ENCODE measurements at regions of chr1 and their contacts with region 1.

Region 1: DNA sequence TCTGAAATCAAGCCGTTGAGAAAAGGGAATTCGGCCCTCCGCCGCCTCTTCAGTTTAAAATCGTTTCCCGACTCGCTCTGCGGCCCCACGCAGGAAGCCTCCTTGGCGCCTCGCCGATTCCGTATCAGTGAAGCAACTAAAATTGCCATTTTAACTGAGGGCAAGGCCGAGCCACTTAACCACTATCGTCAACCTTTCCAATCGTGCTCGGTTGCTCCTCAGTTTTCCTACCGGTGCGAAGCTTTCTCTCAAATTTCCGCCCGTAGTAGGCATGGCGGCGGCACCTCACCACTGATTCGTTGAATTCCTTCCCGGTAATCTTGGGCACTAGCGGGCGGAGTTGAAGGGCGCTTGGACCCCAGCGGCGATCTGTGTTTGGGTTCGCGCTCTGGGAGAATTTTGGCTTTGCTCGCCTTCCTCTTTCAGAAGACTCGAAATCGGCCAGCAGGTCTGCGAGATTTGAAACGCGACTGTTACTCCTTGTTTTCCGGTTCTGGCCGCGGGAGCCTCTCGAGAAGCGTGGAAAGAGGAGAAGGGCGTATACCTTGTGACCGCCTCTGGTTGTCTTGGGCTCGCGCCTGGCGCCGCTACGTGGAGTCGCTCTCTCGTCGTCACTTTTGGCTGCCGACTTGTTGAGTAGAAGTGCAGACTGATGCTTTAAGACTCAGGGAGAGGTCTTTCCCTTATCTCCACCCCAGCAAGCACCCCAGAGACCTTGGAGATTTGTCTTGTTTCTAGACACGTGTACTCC is at the starts of genes CENPL and DARS2:
- DNase-seq: peak; percentile 93 to 97 (median 94)
- H3K4me3 ChIP-seq: peak within 1 kb of the TSS; percentile 70 to 99 (median 92)
- H3K4me3 Mint-ChIP-seq: peak within 1 kb of the TSS; percentile 99
- H3K27ac ChIP-seq: peak within 1 kb of the TSS; percentile 91 to 93
- H3K27ac Mint-ChIP-seq: peak within 1 kb of the TSS; percentile 97 to 100 (median 99)
- H3K4me1 ChIP-seq: peaks cover 15 to 26% of the 10 kb centered on the region in 2 donors
- H3K4me1 Mint-ChIP-seq: peaks cover 39% of the 10 kb centered on the region
- H3K27me3 ChIP-seq: no peaks in the 10 kb centered on the region
- H3K27me3 Mint-ChIP-seq: no peaks in the 10 kb centered on the region
- CTCF ChIP-seq: no peak
- polyA plus RNA-seq, gene CENPL: 0.49 to 2.6 (median 0.81) TPM
- polyA plus RNA-seq, gene DARS2: 3.2 to 8.2 (median 6.2) TPM

Region 2: DNA sequence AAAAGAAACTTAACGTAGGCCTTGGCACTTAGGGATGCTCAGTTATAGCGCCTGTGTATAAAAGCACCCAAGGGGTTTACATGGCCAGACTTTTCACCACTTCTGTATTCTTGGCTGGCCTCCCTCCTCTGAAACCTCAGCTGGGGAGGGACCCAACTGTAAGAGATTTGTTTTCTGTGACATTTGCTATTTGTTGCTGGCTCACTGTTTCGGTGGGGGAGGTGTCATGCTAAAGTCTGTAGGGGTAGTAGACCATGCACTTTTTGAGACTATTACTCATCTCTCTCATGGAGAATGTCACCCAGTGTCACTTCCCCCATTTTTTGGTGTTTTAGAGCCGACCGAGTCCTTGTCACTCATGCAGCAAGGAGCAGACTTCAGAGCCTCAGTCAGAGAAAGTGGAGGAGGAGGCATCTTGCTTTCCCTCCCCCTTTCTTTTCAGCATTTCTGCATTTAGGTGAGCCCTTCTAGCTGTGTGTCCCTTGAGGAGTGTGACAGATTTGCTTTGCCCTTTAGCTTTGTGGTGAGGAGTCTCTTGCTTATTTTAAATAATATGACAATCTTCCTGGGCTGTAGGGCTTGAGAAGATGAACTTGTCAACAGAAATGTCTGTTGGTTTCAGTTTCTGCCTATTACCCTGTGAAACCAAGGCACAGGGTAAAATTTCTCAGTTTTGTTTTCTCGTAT is 1005.5 kb before region 1 on chr1:
- intact Hi-C with region 1: loop called in 1 of 2 experiments (anchors 5 kb)
- DNase-seq: peak; percentile 77 to 82 (median 82)
- H3K4me3 ChIP-seq: no peak overlapping the region
- H3K4me3 Mint-ChIP-seq: no peak overlapping the region
- H3K27ac ChIP-seq: peak overlapping the region in 1 of 2 donors; percentile 73
- H3K27ac Mint-ChIP-seq: peak overlapping the region; percentile 43 to 91 (median 86)
- H3K4me1 ChIP-seq: peaks cover 15 to 23% of the 10 kb centered on the region in 2 donors
- H3K4me1 Mint-ChIP-seq: peaks cover 32% of the 10 kb centered on the region
- H3K27me3 ChIP-seq: no peaks in the 10 kb centered on the region
- H3K27me3 Mint-ChIP-seq: peaks cover 0 to 2% (median 2%) of the 10 kb centered on the region in 3 donors
- CTCF ChIP-seq: no peak

Region 3: GRCh38 chr1:173420330-173420806 is 404.1 kb before region 1 on chr1:
- intact Hi-C with region 1: loop called in 1 of 2 experiments (anchors 5 kb)
- DNase-seq: peak; percentile 72 to 83 (median 73)
- H3K4me3 ChIP-seq: no peak overlapping the region
- H3K4me3 Mint-ChIP-seq: peak overlapping the region in 1 of 2 donors; percentile 58
- H3K27ac ChIP-seq: no peak overlapping the region
- H3K27ac Mint-ChIP-seq: peak overlapping the region in 3 of 7 donors; percentile 51 to 79 (median 62)
- H3K4me1 ChIP-seq: peaks cover 38 to 47% of the 10 kb centered on the region in 2 donors
- H3K4me1 Mint-ChIP-seq: peaks cover 58% of the 10 kb centered on the region
- H3K27me3 ChIP-seq: no peaks in the 10 kb centered on the region
- H3K27me3 Mint-ChIP-seq: peaks cover 0 to 3% (median 0%) of the 10 kb centered on the region in 3 donors
- CTCF ChIP-seq: peak; percentile 91

Region 4: GRCh38 chr1:173429471-173430402 is 394.8 kb before region 1 on chr1:
- intact Hi-C with region 1: loop called (anchors 5 kb)
- DNase-seq: peak; percentile 55 to 64 (median 56)
- H3K4me3 ChIP-seq: peak overlapping the region; percentile 23 to 73 (median 52)
- H3K4me3 Mint-ChIP-seq: peak overlapping the region; percentile 62 to 89
- H3K27ac ChIP-seq: peak overlapping the region; percentile 64 to 82
- H3K27ac Mint-ChIP-seq: peak overlapping the region; percentile 79 to 94 (median 88)
- H3K4me1 ChIP-seq: peaks cover 32 to 35% of the 10 kb centered on the region in 2 donors
- H3K4me1 Mint-ChIP-seq: peaks cover 38% of the 10 kb centered on the region
- H3K27me3 ChIP-seq: no peaks in the 10 kb centered on the region
- H3K27me3 Mint-ChIP-seq: peaks cover 0 to 2% (median 0%) of the 10 kb centered on the region in 3 donors
- CTCF ChIP-seq: peak; percentile 68

Region 5: DNA sequence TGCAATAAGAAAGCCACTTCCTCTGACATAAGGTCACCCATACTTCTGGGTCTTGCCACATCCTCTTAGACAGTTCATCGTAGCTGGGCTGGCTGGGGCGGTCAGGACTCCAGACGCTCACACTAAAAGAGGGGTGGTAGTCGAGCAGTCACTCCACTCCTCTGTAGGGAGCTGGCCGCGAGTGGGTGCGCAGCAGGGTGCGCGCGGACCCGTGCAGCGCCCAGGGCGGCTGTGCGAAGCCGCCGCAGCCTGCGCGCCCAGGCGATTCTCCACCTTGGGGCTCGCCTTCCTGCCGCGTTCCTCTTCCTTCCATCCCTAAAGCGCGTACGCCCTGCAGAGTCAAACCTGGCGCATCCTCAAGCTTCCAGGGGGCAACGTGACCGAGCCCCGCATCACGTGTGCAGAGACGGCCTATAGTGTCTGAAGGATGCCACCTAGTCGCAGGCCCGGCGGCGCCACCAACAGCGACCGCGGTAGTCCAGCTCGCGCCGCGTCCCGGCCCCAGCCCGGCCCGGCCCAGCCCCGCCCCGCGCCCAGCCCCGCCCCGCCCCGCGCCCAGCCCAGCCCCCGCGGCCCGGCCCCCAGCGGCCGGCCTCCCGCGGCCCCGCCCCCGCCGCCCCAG is 347.7 kb before region 1 on chr1:
- intact Hi-C with region 1: loop called (anchors 5 kb)
- DNase-seq: peak; percentile 84 to 88 (median 87)
- H3K4me3 ChIP-seq: peak overlapping the region; percentile 77 to 92 (median 86)
- H3K4me3 Mint-ChIP-seq: peak overlapping the region; percentile 92 to 93
- H3K27ac ChIP-seq: peak overlapping the region; percentile 84 to 97
- H3K27ac Mint-ChIP-seq: peak overlapping the region; percentile 94 to 98 (median 97)
- H3K4me1 ChIP-seq: peaks cover 37 to 45% of the 10 kb centered on the region in 2 donors
- H3K4me1 Mint-ChIP-seq: peaks cover 52% of the 10 kb centered on the region
- H3K27me3 ChIP-seq: no peaks in the 10 kb centered on the region
- H3K27me3 Mint-ChIP-seq: peaks cover 0 to 4% (median 1%) of the 10 kb centered on the region in 3 donors
- CTCF ChIP-seq: no peak

Region 6: DNA sequence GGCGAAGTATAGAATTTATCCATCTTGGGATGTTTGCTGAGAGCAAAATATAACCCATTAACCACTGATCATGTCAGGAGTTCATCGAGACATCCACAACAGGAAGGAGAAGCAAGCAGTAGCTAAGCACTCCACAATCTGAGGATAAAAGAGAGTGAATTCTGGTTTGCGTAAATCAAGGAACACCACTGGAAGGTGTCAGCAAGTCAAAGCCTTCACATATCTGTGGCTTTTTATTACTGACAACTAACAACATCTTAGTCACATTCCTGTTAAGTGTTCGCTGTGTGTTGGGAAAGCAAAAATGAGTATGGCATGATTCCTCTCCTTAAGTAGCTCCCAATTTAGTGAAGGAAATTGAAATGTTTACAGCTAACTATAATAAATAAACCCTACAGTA is 44.6 kb before region 1 on chr1:
- intact Hi-C with region 1: no loop called
- DNase-seq: no peak
- H3K4me3 ChIP-seq: no peak overlapping the region
- H3K4me3 Mint-ChIP-seq: no peak overlapping the region
- H3K27ac ChIP-seq: no peak overlapping the region
- H3K27ac Mint-ChIP-seq: no peak overlapping the region
- H3K4me1 ChIP-seq: no peaks in the 10 kb centered on the region
- H3K4me1 Mint-ChIP-seq: peaks cover 7% of the 10 kb centered on the region
- H3K27me3 ChIP-seq: no peaks in the 10 kb centered on the region
- H3K27me3 Mint-ChIP-seq: peaks cover 0 to 2% (median 1%) of the 10 kb centered on the region in 3 donors
- CTCF ChIP-seq: no peak

Region 7: GRCh38 chr1:173867753-173868265 is 43.3 kb after region 1 on chr1 and contains the start of gene GAS5:
- intact Hi-C with region 1: loop called (anchors 1 to 5 kb)
- DNase-seq: peak; percentile 96 to 98 (median 98)
- H3K4me3 ChIP-seq: peak within 1 kb of the TSS; percentile 89 to 96 (median 94)
- H3K4me3 Mint-ChIP-seq: peak within 1 kb of the TSS; percentile 98 to 99
- H3K27ac ChIP-seq: peak within 1 kb of the TSS; percentile 86 to 91
- H3K27ac Mint-ChIP-seq: peak within 1 kb of the TSS; percentile 91 to 97 (median 96)
- H3K4me1 ChIP-seq: peaks cover 22 to 32% of the 10 kb centered on the region in 2 donors
- H3K4me1 Mint-ChIP-seq: peaks cover 50% of the 10 kb centered on the region
- H3K27me3 ChIP-seq: no peaks in the 10 kb centered on the region
- H3K27me3 Mint-ChIP-seq: peaks cover 0 to 2% (median 0%) of the 10 kb centered on the region in 3 donors
- CTCF ChIP-seq: no peak
- polyA plus RNA-seq, gene GAS5: 90.4 to 309 (median 92.0) TPM

Measured in CD14-positive monocyte (primary cell).